SK-N-SH (cell line): ENCODE measurements at regions of chr5 and their contacts with region 1.

Region 1: GRCh38 chr5:140875066-140876065 is at the start of gene PCDHA12:
- DNase-seq: peak; percentile 70
- H3K4me3 ChIP-seq: peak within 1 kb of the TSS; percentile 56 to 64
- H3K27ac ChIP-seq: peak within 1 kb of the TSS in 1 of 2 experiments; percentile 50; a peak in 2 of 4 replicates
- H3K4me1 ChIP-seq: no peaks in the 10 kb centered on the region; a peak in 2 of 4 replicates
- H3K27me3 ChIP-seq: no peaks in the 10 kb centered on the region
- CTCF ChIP-seq: peak; percentile 62
- EP300 ChIP-seq: no peak
- RAD21 ChIP-seq: peak; percentile 84
- polyA plus RNA-seq, gene PCDHA12: 0.54 and 0.70 TPM in 2 replicates

Region 2: GRCh38 chr5:140795259-140795641 is 80.1 kb before region 1 on chr5:
- CTCF ChIA-PET with region 1: no interaction called
- POLR2A ChIA-PET with region 1: no interaction called
- DNase-seq: no peak
- H3K4me3 ChIP-seq: peak overlapping the region in 1 of 2 experiments; percentile 16; a peak in 1 of 4 replicates
- H3K27ac ChIP-seq: no peak overlapping the region
- H3K4me1 ChIP-seq: no peaks in the 10 kb centered on the region
- H3K27me3 ChIP-seq: no peaks in the 10 kb centered on the region
- CTCF ChIP-seq: no peak
- EP300 ChIP-seq: no peak
- RAD21 ChIP-seq: no peak

Region 3: DNA sequence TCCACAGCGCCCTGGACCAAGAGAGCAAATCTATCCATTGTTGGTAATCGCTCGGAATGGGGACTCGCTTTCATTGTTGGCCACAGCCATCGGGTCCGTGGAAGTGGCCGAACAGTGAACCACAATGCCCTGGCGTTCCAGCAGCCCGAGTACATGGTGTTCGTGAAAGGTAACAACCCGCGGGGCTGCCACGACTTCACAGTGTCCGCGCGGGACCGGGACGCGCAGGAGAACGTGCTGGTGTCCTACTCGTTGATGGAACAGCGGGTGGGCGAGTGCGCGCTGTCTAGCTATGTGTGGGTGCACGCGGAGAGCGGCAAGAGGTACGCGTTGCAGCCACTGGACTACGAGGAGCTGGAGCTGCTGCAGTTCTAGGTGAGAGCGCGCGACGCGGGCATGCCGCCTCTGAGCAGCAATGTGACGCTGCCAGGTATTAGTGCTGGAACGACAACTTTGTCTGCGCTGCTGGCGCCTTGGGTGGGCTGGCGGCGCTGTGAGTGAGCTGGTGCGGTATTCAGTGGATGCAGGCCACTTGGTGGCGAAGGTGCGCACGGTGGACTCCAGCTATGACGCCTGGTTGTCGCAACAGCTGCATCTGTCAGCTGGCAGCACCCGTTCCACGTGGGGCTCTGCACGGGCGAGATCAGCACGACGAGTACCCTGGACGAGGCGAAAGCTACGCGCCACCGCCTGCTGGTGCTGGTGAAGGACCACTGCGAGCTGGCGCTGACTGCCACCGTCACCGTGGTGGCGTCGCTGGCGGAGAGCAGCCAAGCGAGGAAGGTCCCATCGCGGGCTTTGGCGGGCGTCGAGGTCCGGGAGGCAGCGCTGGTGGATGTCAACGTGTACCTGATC is 12.7 kb before region 1 on chr5:
- CTCF ChIA-PET with region 1: interaction called, 12 read pairs
- POLR2A ChIA-PET with region 1: no interaction called
- DNase-seq: no peak
- H3K4me3 ChIP-seq: no peak overlapping the region; a peak in 1 of 4 replicates
- H3K27ac ChIP-seq: no peak overlapping the region
- H3K4me1 ChIP-seq: no peaks in the 10 kb centered on the region
- H3K27me3 ChIP-seq: no peaks in the 10 kb centered on the region
- CTCF ChIP-seq: no peak
- EP300 ChIP-seq: no peak
- RAD21 ChIP-seq: no peak